Mammary epithelial cell (primary cell): ENCODE measurements at regions of chr2 and their contacts with region 1.

Region 1: DNA sequence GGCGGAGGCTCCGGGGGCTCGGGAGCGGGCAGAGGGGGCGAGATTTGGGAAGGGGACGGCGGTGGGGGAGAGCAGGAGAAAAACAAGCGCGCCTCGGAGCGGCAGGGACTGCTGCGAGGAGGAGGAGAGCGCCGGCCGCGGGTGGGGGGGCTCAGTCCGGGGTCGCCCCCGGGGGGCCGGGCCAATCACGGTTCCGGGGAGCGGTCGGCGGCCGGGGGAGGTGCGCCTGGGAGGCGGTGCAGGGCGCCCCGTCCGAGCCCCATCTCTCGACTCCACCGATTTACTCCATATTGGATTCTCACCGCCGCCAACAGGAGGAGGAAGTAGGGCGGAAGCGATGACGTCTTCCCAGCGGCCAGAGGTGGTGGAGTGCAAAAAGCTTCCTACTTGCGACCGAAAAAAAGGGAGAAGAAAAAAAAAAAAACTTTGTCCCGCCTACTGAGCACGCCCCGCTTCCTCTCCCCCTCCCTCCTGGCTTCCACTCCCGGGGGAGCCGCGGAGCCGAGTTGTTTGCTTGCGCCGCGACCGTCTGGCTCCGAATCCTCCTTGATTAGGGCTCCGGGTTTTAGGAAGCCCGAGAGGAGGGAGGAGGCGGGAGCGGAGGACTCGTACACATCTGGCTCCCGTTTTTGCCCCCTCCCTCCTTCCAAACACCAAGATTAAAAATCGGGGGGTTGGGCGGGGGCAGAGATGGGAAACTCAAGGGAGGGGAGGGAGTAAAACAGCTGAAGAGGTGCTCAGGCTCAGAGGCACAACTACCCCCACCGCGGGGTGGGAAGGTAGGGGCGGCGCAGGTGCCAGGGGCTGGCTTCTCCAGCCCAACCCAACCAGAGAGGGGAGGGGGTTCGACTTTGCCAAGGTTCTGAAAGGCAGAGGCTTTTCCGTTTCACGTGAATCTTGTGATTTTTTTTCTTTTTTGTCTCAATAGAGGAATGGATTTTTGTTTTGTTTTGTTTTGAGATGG is at the start of gene SPRED2:
- DNase-seq: peak; percentile 97
- H3K4me3 ChIP-seq: peak within 1 kb of the TSS; percentile 69 to 93 (median 92)
- H3K27ac ChIP-seq: peak within 1 kb of the TSS; percentile 59
- H3K4me1 ChIP-seq: peaks cover 30% of the 10 kb centered on the region
- H3K27me3 ChIP-seq: no peaks in the 10 kb centered on the region
- CTCF ChIP-seq: peak in 1 of 2 donors; percentile 19
- total RNA-seq, gene SPRED2: 14.7 to 60.6 TPM

Region 2: GRCh38 chr2:65264821-65265670 is 167.5 kb before region 1 on chr2:
- CTCF ChIA-PET with region 1: no interaction called
- dilution Hi-C with region 1: no loop called
- in situ Hi-C with region 1: no loop called
- intact Hi-C with region 1: loop called (anchors 1 kb)
- DNase-seq: peak; percentile 51
- H3K4me3 ChIP-seq: no peak overlapping the region
- H3K27ac ChIP-seq: no peak overlapping the region
- H3K4me1 ChIP-seq: no peaks in the 10 kb centered on the region
- H3K27me3 ChIP-seq: no peaks in the 10 kb centered on the region
- CTCF ChIP-seq: peak; percentile 53 to 64

Region 3: DNA sequence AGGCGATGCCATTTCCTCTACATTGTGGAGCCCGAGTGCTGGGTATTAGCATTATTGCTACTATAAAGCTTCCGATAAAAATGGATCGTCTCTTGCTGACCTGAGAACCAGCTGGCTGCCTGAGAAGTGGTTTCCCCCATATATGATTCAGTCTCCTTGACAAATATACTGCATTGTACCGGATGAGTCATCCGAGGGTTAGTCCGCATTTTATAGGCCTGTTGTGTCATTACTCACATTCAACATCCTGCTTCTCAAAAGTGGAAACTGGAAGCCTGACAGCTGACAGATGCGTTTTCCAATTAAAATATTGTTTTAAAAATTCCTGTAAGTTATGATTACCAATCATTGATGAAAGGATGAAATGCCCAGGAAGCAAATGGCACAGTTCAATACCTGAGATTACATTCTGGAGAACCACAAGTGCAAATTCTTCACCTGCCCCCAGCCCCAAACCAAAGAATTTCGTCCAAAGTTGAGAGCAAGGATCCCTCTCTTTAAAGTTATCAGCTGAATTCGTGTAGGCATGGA is 65.8 kb before region 1 on chr2:
- CTCF ChIA-PET with region 1: no interaction called
- dilution Hi-C with region 1: no loop called
- in situ Hi-C with region 1: no loop called
- intact Hi-C with region 1: loop called (anchors 1 kb)
- DNase-seq: peak; percentile 98
- H3K4me3 ChIP-seq: peak overlapping the region; percentile 28 to 51 (median 30)
- H3K27ac ChIP-seq: peak overlapping the region; percentile 92
- H3K4me1 ChIP-seq: peaks cover 49% of the 10 kb centered on the region
- H3K27me3 ChIP-seq: no peaks in the 10 kb centered on the region
- CTCF ChIP-seq: no peak

Region 4: GRCh38 chr2:65388051-65388531 is 44.4 kb before region 1 on chr2:
- CTCF ChIA-PET with region 1: interaction called, 7 read pairs
- dilution Hi-C with region 1: loop called (anchors 10 kb)
- in situ Hi-C with region 1: loop called in 1 of 2 experiments (anchors 5 kb)
- intact Hi-C with region 1: loop called (anchors 1 kb)
- DNase-seq: peak; percentile 95
- H3K4me3 ChIP-seq: peak overlapping the region in 2 of 3 experiments; percentile 14 to 26
- H3K27ac ChIP-seq: peak overlapping the region; percentile 93
- H3K4me1 ChIP-seq: peaks cover 83% of the 10 kb centered on the region
- H3K27me3 ChIP-seq: no peaks in the 10 kb centered on the region
- CTCF ChIP-seq: no peak

Region 5: GRCh38 chr2:65545837-65546805 is 113.6 kb after region 1 on chr2:
- CTCF ChIA-PET with region 1: no interaction called
- dilution Hi-C with region 1: no loop called
- in situ Hi-C with region 1: loop called in 1 of 2 experiments (anchors 5 kb)
- intact Hi-C with region 1: no loop called
- DNase-seq: peak; percentile 47
- H3K4me3 ChIP-seq: no peak overlapping the region
- H3K27ac ChIP-seq: no peak overlapping the region
- H3K4me1 ChIP-seq: peaks cover 12% of the 10 kb centered on the region
- H3K27me3 ChIP-seq: no peaks in the 10 kb centered on the region
- CTCF ChIP-seq: no peak

Region 6: DNA sequence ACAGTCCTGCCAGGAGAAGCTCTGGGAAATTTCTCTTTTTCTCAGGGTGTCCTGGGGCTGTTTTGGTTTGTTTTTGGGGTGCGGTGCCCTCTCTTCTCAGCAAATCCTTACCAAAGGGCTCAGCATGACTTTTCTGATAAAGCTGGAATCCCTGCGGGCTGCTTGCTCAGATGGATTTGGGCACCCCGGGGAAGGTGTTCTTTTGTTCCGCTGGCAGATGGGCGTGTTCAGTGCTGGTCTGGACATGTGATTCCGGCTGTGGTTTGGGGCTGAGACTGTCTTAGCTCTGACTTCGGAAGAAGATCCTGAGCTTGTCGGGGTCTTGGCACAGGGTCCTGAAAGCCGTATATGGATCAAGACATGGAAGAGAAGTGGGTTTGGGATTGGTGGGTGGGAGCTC is 134.1 kb after region 1 on chr2:
- CTCF ChIA-PET with region 1: no interaction called
- dilution Hi-C with region 1: no loop called
- in situ Hi-C with region 1: no loop called
- intact Hi-C with region 1: loop called (anchors 5 kb)
- DNase-seq: peak; percentile 88
- H3K4me3 ChIP-seq: peak overlapping the region; percentile 43 to 67 (median 49)
- H3K27ac ChIP-seq: peak overlapping the region; percentile 96
- H3K4me1 ChIP-seq: peaks cover 19% of the 10 kb centered on the region
- H3K27me3 ChIP-seq: no peaks in the 10 kb centered on the region
- CTCF ChIP-seq: no peak